Endothelial cell of umbilical vein (primary cell): ENCODE measurements at regions of chr7 and their contacts with region 1.

Region 1: DNA sequence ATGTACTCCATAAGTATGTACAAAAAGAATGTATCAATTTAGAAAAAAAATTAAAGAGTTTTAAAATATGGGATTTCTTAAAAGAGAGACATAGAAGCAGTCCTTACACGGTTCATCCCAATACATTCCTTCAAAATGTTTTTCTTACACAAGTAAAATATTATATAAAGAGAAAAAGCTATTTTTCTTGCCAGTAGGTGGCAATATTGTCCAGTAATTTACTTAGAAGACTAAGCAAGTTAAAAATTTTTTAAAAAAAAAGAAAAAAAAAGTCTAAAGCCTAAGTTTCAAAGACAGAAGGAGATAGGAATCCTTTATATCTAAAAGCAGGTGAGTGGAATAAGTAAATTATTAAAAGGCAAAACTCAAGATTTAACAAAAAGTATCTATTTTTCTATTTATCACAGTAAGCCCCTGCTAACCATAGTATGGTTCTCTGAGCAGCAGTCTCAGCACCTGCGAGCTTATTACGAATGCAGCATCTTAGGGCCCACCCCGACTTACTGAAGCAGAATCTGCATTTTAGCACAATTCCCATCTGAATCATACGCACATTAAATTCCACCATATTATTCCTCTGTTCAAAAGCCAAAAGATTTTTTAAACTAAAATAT is 240.6 kb downstream of the DGKI start:
- DNase-seq: peak; percentile 62
- H3K4me3 ChIP-seq: no peak overlapping the region
- H3K27ac ChIP-seq: no peak overlapping the region
- H3K4me1 ChIP-seq: no peaks in the 10 kb centered on the region
- H3K27me3 ChIP-seq: peaks cover 15 to 24% of the 10 kb centered on the region in 2 experiments
- CTCF ChIP-seq: peak in 1 of 2 donors; percentile 19
- POLR2A ChIP-seq: no peak

Region 2: DNA sequence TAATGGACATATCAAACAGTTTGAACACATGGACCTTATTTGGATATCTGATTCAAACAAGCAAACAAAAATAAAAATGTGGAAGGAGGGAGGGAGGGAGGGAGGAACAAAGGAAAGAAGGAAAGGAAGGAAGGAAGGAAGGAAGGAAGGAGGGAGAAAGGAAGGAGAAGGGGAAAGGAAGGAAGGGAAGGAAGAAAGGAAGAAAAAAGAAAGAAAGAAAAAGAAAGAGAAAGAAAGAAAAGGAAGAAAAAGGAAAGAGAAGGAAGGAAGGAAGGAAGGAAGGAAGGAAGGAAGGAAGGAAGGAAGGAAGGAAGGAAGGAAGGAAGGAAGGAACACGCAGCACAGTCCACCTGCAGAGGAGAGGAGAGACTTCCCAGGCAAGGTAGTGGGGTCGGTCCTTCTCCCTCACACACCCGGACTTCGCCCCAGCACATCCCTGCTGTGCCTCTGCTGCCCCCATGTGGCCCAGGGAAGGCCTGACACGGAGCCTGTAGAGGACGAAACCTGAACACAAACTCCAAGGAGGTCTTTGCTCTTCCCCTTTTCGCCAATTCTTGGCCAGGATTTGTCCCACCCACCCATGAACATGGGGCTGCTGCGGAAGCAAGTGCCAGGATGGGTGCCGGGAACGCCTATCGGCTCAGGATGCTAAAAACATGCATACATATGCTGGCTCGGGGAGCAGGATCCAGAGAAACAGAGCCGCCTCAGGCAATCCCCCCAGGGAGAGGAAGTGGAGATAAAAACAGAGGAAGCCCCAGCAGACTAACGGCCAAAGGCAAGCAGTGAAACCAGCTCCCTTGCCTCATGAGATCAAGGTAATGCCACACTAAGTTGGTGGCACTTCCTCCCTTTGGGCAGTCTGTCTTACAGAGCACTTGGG is 292.9 kb after region 1 on chr7:
- CTCF ChIA-PET with region 1: interaction called, 11 read pairs
- POLR2A ChIA-PET with region 1: no interaction called
- dilution Hi-C with region 1: no loop called
- intact Hi-C with region 1: loop called (anchors 1 kb)
- DNase-seq: peak; percentile 73
- H3K4me3 ChIP-seq: no peak overlapping the region
- H3K27ac ChIP-seq: no peak overlapping the region
- H3K4me1 ChIP-seq: peaks cover 2% of the 10 kb centered on the region
- H3K27me3 ChIP-seq: no peaks in the 10 kb centered on the region
- CTCF ChIP-seq: peak; percentile 91 to 98
- POLR2A ChIP-seq: no peak